CD4-positive, alpha-beta T cell (primary cell): ENCODE measurements at regions of chr21 and their contacts with region 1.

Region 1: DNA sequence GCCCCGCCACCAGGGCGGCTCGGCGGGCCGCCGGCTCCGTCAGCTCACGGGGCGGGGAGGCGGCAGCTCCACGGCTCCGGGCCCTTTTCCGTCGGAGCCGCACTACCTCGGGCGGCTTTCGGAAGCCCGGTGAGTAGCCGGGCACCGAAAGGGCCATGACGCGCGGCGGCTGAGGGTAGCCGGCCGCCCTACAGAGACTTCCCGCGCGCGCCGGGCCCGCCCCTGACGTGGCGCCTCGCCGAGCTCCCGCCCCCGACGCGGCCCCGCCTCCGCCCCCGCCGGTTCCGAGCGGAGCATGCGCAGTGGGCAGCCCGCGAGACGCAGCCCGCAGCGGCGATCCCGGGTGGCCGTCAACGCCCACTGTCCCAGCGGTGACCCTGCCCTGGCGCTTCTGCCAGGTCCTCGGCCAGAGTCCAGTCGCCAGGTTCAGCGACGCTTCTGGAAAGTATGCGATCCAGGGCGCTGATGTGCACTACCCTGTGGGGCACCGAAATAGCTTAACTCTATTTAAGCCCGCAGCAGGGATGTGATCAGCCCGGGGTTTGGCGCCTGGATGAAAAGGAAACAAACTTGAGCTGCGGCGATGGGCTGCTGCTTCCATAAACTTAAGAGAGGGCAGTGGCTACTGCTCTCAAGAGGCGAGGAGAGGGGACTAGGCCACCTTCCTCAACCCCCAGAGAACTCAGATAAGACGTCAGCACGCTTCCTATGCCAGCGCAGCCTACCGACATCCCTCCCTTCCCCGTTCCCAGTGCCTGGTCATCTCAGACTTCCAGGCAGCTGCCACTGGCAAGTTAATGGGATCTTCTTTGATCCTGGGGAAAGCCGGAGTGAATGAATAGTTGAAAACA is at the start of gene DONSON:
- DNase-seq: peak; percentile 72 to 95 (median 84)
- ATAC-seq: peak; percentile 90
- H3K4me3 ChIP-seq: peak within 1 kb of the TSS; percentile 75
- H3K4me3 Mint-ChIP-seq: peak within 1 kb of the TSS; percentile 97
- H3K27ac ChIP-seq: peak within 1 kb of the TSS; percentile 4 to 42
- H3K27ac Mint-ChIP-seq: peak within 1 kb of the TSS; percentile 81
- H3K4me1 ChIP-seq: peaks cover 11% of the 10 kb centered on the region
- H3K4me1 Mint-ChIP-seq: peaks cover 10% of the 10 kb centered on the region
- H3K27me3 ChIP-seq: no peaks in the 10 kb centered on the region
- H3K27me3 Mint-ChIP-seq: no peaks in the 10 kb centered on the region
- CTCF ChIP-seq: no peak
- total RNA-seq, gene DONSON: 11.9 to 13.5 TPM

Region 2: GRCh38 chr21:33229784-33230544 is 358.7 kb before region 1 on chr21 and contains the start of gene IFNAR2:
- CTCF ChIA-PET with region 1: no interaction called
- POLR2A ChIA-PET with region 1: no interaction called
- intact Hi-C with region 1: no loop called
- DNase-seq: peak; percentile 51 to 86 (median 71)
- ATAC-seq: peak; percentile 85
- H3K4me3 ChIP-seq: peak within 1 kb of the TSS; percentile 87
- H3K4me3 Mint-ChIP-seq: peak within 1 kb of the TSS; percentile 96
- H3K27ac ChIP-seq: peak within 1 kb of the TSS; percentile 60 to 87
- H3K27ac Mint-ChIP-seq: peak within 1 kb of the TSS; percentile 90
- H3K4me1 ChIP-seq: peaks cover 24% of the 10 kb centered on the region
- H3K4me1 Mint-ChIP-seq: peaks cover 48% of the 10 kb centered on the region
- H3K27me3 ChIP-seq: no peaks in the 10 kb centered on the region
- H3K27me3 Mint-ChIP-seq: no peaks in the 10 kb centered on the region
- CTCF ChIP-seq: no peak
- total RNA-seq, gene IFNAR2: 26.6 to 28.2 TPM

Region 3: GRCh38 chr21:33479679-33480480 is 108.8 kb before region 1 on chr21 and contains the start of gene TMEM50B:
- CTCF ChIA-PET with region 1: interaction called, 6 read pairs
- POLR2A ChIA-PET with region 1: interaction called, 25 read pairs
- intact Hi-C with region 1: no loop called
- DNase-seq: peak; percentile 91 to 99 (median 96)
- ATAC-seq: peak; percentile 89
- H3K4me3 ChIP-seq: peak within 1 kb of the TSS; percentile 88
- H3K4me3 Mint-ChIP-seq: peak within 1 kb of the TSS; percentile 89
- H3K27ac ChIP-seq: peak within 1 kb of the TSS; percentile 80 to 90
- H3K27ac Mint-ChIP-seq: peak within 1 kb of the TSS; percentile 96
- H3K4me1 ChIP-seq: peaks cover 22% of the 10 kb centered on the region
- H3K4me1 Mint-ChIP-seq: peaks cover 19% of the 10 kb centered on the region
- H3K27me3 ChIP-seq: no peaks in the 10 kb centered on the region
- H3K27me3 Mint-ChIP-seq: no peaks in the 10 kb centered on the region
- CTCF ChIP-seq: peak; percentile 0
- total RNA-seq, gene TMEM50B: 38.4 to 40.3 TPM

Region 4: DNA sequence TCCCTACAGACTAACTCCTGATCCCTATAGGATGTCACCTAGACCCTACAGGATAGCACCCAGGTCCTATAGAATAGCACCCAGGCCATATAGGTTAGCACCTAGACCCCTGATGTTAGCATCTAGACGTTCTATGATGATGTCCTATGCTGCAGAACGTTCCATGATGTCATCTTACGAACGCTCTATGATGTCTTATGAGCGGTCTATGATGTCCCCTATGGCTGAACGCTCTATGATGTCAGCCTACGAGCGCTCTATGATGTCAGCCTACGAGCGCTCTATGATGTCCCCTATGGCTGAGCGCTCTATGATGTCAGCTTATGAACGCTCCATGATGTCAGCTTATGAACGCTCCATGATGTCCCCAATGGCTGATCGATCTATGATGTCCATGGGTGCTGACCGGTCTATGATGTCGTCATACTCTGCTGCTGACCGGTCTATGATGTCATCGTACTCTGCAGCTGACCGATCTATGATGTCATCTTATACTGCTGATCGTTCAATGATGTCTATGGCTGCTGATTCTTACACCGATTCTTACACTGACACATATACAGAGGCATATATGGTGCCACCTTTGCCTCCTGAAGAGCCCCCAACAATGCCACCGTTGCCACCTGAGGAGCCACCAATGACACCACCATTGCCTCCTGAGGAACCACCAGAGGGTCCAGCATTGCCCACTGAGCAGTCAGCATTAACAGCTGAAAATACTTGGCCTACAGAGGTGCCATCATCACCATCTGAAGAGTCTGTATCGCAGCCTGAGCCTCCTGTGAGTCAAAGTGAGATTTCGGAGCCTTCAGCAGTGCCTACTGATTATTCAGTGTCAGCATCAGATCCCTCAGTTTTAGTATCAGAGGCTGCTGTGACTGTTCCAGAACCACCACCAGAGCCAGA is 36.4 kb before region 1 on chr21:
- CTCF ChIA-PET with region 1: interaction called, 5 read pairs
- POLR2A ChIA-PET with region 1: interaction called, 11 read pairs
- intact Hi-C with region 1: no loop called
- DNase-seq: no peak
- ATAC-seq: peak; percentile 28
- H3K4me3 ChIP-seq: no peak overlapping the region
- H3K4me3 Mint-ChIP-seq: peak overlapping the region; percentile 20
- H3K27ac ChIP-seq: no peak overlapping the region
- H3K27ac Mint-ChIP-seq: peak overlapping the region; percentile 51
- H3K4me1 ChIP-seq: peaks cover 12% of the 10 kb centered on the region
- H3K4me1 Mint-ChIP-seq: peaks cover 60% of the 10 kb centered on the region
- H3K27me3 ChIP-seq: no peaks in the 10 kb centered on the region
- H3K27me3 Mint-ChIP-seq: no peaks in the 10 kb centered on the region
- CTCF ChIP-seq: no peak

Region 5: GRCh38 chr21:33608559-33608958 is 19.8 kb after region 1 on chr21:
- CTCF ChIA-PET with region 1: interaction called, 27 read pairs
- POLR2A ChIA-PET with region 1: interaction called, 12 read pairs
- intact Hi-C with region 1: no loop called
- DNase-seq: no peak
- ATAC-seq: no peak
- H3K4me3 ChIP-seq: no peak overlapping the region
- H3K4me3 Mint-ChIP-seq: no peak overlapping the region
- H3K27ac ChIP-seq: no peak overlapping the region
- H3K27ac Mint-ChIP-seq: no peak overlapping the region
- H3K4me1 ChIP-seq: no peaks in the 10 kb centered on the region
- H3K4me1 Mint-ChIP-seq: peaks cover 5% of the 10 kb centered on the region
- H3K27me3 ChIP-seq: no peaks in the 10 kb centered on the region
- H3K27me3 Mint-ChIP-seq: no peaks in the 10 kb centered on the region
- CTCF ChIP-seq: no peak

Region 6: DNA sequence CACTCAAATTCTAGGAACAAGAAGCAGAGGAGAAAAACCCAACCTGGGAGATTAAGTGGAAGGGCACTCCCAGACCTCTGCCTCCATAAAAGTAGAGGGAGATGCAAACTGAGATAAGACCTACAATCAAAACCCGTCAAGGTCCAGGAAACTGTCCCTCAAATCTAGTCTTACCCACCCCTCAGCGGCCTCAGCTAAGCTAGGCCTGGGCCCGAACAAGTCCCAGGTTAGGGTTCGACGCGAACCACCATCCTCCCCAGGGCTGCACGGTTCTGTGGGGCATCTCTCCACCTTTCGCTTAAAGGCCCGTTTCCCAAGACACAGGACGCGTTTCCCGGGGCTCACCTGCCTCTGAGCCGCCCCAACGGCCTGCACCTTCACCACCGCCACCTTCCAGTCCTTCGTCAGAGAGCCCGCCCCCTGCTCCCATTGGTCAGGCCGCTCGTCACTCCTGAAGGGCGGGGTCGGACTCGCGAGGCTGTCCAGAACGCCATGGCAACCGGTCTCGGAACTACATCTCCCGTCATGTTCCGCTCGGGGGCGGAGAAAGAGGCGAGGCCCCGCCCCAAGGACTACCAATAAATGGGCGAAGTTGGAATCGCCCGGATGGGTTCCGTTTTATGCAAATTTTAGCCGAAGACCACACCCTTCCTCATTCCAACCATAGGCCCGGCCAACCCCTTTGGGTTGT is 52.8 kb after region 1 on chr21 and contains the start of gene CRYZL1:
- CTCF ChIA-PET with region 1: no interaction called
- POLR2A ChIA-PET with region 1: interaction called, 6 read pairs
- intact Hi-C with region 1: loop called (anchors 1 to 2 kb)
- DNase-seq: peak; percentile 99 to 100 (median 100)
- ATAC-seq: peak; percentile 75
- H3K4me3 ChIP-seq: peak within 1 kb of the TSS; percentile 67
- H3K4me3 Mint-ChIP-seq: peak within 1 kb of the TSS; percentile 95
- H3K27ac ChIP-seq: peak within 1 kb of the TSS; percentile 75 to 81
- H3K27ac Mint-ChIP-seq: peak within 1 kb of the TSS; percentile 85
- H3K4me1 ChIP-seq: peaks cover 18% of the 10 kb centered on the region
- H3K4me1 Mint-ChIP-seq: peaks cover 40% of the 10 kb centered on the region
- H3K27me3 ChIP-seq: peaks cover 5 to 17% of the 10 kb centered on the region in 2 experiments
- H3K27me3 Mint-ChIP-seq: peaks cover 13% of the 10 kb centered on the region
- CTCF ChIP-seq: no peak
- total RNA-seq, gene CRYZL1: 28.6 to 30.5 TPM